ENCODE measurements at regions of chr3 and their contacts with region 1.

Region 1: DNA sequence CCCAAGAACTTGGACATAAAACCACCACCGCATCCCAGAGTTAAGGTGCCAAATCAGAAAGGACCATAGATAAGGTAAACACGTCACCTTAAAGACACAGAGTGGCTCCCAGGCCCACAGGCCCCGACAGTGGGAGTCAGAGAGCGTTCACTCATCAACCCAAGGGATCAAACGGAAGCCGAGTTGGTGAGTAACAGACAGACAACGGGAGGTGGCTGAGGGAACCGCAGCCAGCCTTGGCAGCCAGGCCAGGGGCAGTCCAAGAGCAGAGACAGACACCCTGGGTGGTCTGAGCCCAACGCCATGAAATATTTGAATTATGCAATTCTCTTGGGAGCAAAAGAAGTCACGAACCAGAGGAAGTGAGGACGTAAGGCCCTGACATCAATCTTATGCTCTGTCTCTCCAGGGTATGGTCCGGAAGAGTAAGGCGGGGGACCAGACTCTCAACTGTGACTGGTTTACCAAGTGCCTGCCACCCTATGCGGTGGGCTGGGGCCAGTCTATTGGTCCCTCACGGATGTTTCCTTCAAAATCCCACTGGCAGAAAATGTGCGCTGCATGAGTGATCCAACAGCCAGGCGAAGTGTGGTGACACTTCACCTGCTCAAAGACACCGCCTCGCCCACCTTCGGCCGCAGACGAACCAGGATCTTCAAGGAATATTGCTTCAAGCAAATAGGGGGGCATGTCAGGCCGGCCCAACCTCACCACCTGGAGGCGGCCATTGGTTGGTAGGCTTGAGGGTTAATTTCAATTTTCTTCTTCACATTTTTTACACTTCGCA is 34.3 kb downstream of the TMEM44 start:
- DNase-seq: no peak
- H3K4me3 ChIP-seq: no peak overlapping the region
- H3K27ac ChIP-seq: no peak overlapping the region
- H3K4me1 ChIP-seq: no peaks in the 10 kb centered on the region
- H3K27me3 ChIP-seq: no peaks in the 10 kb centered on the region
- CTCF ChIP-seq: no peak
- EP300 ChIP-seq: no peak
- POLR2A ChIP-seq: no peak

Region 2: GRCh38 chr3:194465920-194466570 is 132.9 kb before region 1 on chr3:
- intact Hi-C with region 1: loop called in 3 of 4 experiments (anchors 5 to 10 kb)
- DNase-seq: no peak
- H3K4me3 ChIP-seq: no peak overlapping the region
- H3K27ac ChIP-seq: no peak overlapping the region
- H3K4me1 ChIP-seq: peaks cover 4% of the 10 kb centered on the region
- H3K27me3 ChIP-seq: no peaks in the 10 kb centered on the region
- CTCF ChIP-seq: no peak
- EP300 ChIP-seq: no peak
- POLR2A ChIP-seq: no peak